ENCODE measurements at regions of chr5 and their contacts with region 1.

Region 1: GRCh38 chr5:115296124-115297022 is at the start of gene CCDC112:
- DNase-seq: peak; percentile 64
- ATAC-seq: peak; percentile 83
- H3K4me3 Mint-ChIP-seq: peak within 1 kb of the TSS; percentile 85
- H3K27ac Mint-ChIP-seq: peak within 1 kb of the TSS; percentile 47
- H3K4me1 Mint-ChIP-seq: peaks cover 13% of the 10 kb centered on the region
- H3K27me3 Mint-ChIP-seq: no peaks in the 10 kb centered on the region
- CTCF ChIP-seq: no peak
- total RNA-seq, gene CCDC112: 5.2 and 5.3 TPM in 2 replicates

Region 2: DNA sequence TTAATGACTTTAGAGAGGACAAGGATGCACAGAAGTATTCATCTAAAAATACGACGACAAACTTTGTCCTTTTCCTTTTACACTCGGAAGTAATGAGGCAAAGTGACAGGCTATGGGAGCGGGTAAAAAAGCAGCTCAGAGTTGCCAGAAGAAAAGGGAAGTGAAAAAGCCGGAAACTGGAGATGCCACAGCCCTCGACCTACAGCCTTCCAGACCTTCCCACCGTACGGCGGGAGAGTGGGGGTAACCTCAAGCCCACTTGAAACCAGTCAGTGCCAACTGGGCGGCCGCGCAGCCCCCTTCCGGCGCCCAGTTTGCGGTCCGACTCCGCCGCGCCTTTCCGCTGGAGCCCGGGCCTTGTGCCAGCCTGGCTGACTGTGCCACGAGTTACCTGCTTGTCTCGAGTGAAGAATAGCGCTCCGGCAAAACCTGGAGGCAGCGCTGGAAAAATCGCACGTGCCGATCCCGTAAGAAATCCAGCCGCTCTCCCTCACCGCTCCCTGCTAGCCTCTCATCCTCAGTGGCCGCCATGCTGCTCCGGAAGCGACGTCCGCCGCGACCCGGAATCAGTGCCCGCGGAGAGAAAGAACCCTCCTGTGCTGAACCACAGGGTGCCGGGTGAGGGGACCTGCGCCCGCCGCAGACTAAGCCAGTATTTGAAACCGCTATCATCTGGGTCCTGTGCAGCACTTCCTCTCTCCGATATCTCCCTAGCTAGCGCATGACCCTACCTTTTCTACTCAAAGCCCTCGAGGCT is 33.9 kb before region 1 on chr5 and contains the start of gene PGGT1B:
- CTCF ChIA-PET with region 1: no interaction called
- POLR2A ChIA-PET with region 1: interaction called, 10 read pairs
- intact Hi-C with region 1: loop called (anchors 1 kb)
- DNase-seq: peak; percentile 63
- ATAC-seq: peak; percentile 91
- H3K4me3 Mint-ChIP-seq: peak within 1 kb of the TSS; percentile 99
- H3K27ac Mint-ChIP-seq: peak within 1 kb of the TSS; percentile 96
- H3K4me1 Mint-ChIP-seq: peaks cover 52% of the 10 kb centered on the region
- H3K27me3 Mint-ChIP-seq: no peaks in the 10 kb centered on the region
- CTCF ChIP-seq: no peak
- total RNA-seq, gene PGGT1B: 52.1 and 52.9 TPM in 2 replicates

Region 3: DNA sequence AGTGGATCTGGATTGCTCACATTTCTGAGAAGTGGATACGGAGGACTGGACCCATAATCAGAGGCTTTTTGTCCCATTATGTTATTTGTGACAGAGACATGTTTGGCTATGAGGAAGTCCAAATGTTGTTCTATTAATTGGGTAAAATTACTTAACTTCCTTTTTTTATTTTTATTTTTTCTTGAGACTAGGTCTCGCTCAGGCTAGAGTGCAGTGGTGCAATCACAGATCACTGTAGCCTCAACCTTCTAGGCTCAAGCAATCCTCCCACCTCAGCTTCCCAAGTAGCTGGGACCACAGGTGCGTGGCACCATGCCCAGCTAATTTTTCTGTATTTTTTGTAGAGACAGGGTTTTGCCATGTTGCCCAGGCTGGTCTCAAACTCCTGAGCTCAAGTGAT is 21.8 kb before region 1 on chr5:
- CTCF ChIA-PET with region 1: no interaction called
- POLR2A ChIA-PET with region 1: interaction called, 5 read pairs
- intact Hi-C with region 1: loop called (anchors 2 kb)
- DNase-seq: no peak
- ATAC-seq: peak; percentile 64
- H3K4me3 Mint-ChIP-seq: no peak overlapping the region
- H3K27ac Mint-ChIP-seq: peak overlapping the region; percentile 69
- H3K4me1 Mint-ChIP-seq: peaks cover 45% of the 10 kb centered on the region
- H3K27me3 Mint-ChIP-seq: no peaks in the 10 kb centered on the region
- CTCF ChIP-seq: no peak

Region 4: GRCh38 chr5:115686051-115686737 is 389.8 kb after region 1 on chr5:
- CTCF ChIA-PET with region 1: no interaction called
- POLR2A ChIA-PET with region 1: no interaction called
- intact Hi-C with region 1: no loop called
- DNase-seq: no peak
- ATAC-seq: no peak
- H3K4me3 Mint-ChIP-seq: no peak overlapping the region
- H3K27ac Mint-ChIP-seq: no peak overlapping the region
- H3K4me1 Mint-ChIP-seq: no peaks in the 10 kb centered on the region
- H3K27me3 Mint-ChIP-seq: peaks cover 12% of the 10 kb centered on the region
- CTCF ChIP-seq: no peak

Region 5: GRCh38 chr5:115718927-115719326 is 422.6 kb after region 1 on chr5:
- CTCF ChIA-PET with region 1: no interaction called
- POLR2A ChIA-PET with region 1: no interaction called
- intact Hi-C with region 1: no loop called
- DNase-seq: no peak
- ATAC-seq: no peak
- H3K4me3 Mint-ChIP-seq: no peak overlapping the region
- H3K27ac Mint-ChIP-seq: no peak overlapping the region
- H3K4me1 Mint-ChIP-seq: no peaks in the 10 kb centered on the region
- H3K27me3 Mint-ChIP-seq: peaks cover 16% of the 10 kb centered on the region
- CTCF ChIP-seq: no peak